ENCODE measurements at regions of chr16 and their contacts with region 1.

Region 1: DNA sequence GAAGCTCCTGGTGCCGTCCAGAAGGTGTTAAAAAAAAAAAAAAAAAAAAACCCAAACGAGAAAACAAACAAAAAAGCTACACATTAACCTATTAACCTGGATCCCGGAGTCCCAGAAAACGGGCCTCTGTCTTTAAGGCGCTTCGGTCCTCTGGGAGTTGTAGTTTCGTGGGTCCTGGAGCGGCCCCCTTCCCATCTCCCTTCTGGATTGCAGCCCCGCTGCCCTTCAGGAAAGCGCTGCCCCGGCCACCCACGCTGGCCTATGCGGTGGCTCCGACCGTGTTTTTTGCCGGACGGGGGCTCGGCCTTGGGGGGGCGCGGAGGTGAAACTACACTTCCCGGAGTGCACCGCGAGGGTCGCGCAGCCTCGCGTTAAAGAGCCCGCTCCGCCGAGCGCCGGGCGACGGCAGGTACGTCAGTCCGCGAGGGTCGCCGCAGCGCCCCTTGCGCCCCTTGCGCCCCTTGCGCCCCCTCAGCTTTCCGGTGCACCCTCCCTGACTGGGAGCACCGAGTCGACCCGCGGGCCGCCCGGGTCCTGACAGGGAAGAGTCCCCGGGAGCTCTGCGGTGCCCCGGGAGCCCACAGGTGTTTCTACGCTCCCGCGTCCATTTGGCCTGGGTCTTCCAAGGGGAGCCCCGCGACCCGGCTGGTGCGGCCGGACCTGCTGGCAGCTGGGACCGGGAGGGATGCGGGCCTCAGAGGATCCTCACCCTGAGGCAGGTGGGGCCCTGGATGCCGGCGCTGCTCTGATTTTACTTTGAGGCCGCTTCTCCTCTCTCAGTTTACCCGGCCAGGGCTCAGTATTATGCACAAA is at the start of gene FCSK:
- DNase-seq: peak; percentile 72 to 89
- ATAC-seq: peak; percentile 93
- H3K4me3 ChIP-seq: peak within 1 kb of the TSS; percentile 67 to 85
- H3K27ac ChIP-seq: peak within 1 kb of the TSS in 1 of 2 donors; percentile 66
- H3K4me1 ChIP-seq: no peaks in the 10 kb centered on the region
- H3K27me3 ChIP-seq: no peaks in the 10 kb centered on the region
- total RNA-seq, gene FCSK: 11.0 to 14.8 TPM

Region 2: GRCh38 chr16:70402916-70403659 is 51.3 kb before region 1 on chr16:
- intact Hi-C with region 1: loop called in 1 of 2 experiments (anchors 10 kb)
- DNase-seq: no peak
- ATAC-seq: no peak
- H3K4me3 ChIP-seq: no peak overlapping the region
- H3K27ac ChIP-seq: no peak overlapping the region
- H3K4me1 ChIP-seq: no peaks in the 10 kb centered on the region
- H3K27me3 ChIP-seq: no peaks in the 10 kb centered on the region

Region 3: DNA sequence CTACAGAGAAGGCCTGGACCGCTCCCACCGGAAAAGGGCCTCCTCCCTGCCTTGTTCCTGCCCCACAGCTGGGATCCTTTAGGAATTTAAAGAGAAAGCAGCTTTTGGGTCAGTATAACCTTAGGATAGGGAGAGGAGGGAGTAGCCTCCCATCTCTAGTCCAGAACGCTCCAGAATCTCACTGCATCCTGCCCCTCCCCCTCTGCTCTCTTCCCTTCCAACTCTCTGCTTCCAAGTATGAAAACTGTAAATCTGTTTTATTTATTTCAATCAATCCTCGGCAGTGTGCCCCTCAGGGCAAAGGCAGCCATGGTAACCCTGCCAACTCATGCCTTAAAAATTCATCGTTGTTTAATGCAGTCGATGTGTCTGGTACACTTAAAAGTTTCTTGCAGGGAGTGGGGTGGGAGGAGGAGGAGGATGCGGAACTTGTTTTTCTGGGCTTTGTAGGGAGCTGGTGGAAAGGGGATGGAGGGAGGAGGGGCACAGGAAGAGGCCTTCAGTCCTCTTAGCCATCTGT is 252.6 kb after region 1 on chr16:
- intact Hi-C with region 1: no loop called
- DNase-seq: no peak
- ATAC-seq: no peak
- H3K4me3 ChIP-seq: no peak overlapping the region
- H3K27ac ChIP-seq: peak overlapping the region; percentile 17 to 71
- H3K4me1 ChIP-seq: no peaks in the 10 kb centered on the region
- H3K27me3 ChIP-seq: no peaks in the 10 kb centered on the region

Measured in aorta (tissue), 5 donors.